Sigmoid colon (tissue), 7 donors: ENCODE measurements at regions of chr15 and their contacts with region 1.

Region 1: GRCh38 chr15:37072181-37072580 is 28.2 kb downstream of the MEIS2 start:
- DNase-seq: no peak
- H3K4me3 ChIP-seq: no peak overlapping the region
- H3K27ac ChIP-seq: no peak overlapping the region
- H3K4me1 ChIP-seq: peaks cover 0 to 40% (median 20%) of the 10 kb centered on the region in 4 donors
- H3K27me3 ChIP-seq: no peaks in the 10 kb centered on the region
- CTCF ChIP-seq: no peak
- EP300 ChIP-seq: no peak
- POLR2A ChIP-seq: no peak

Region 2: GRCh38 chr15:37015035-37015434 is 57.1 kb before region 1 on chr15:
- intact Hi-C with region 1: no loop called
- DNase-seq: no peak
- H3K4me3 ChIP-seq: no peak overlapping the region
- H3K27ac ChIP-seq: peak overlapping the region; percentile 72 to 83 (median 81)
- H3K4me1 ChIP-seq: peaks cover 0 to 69% (median 51%) of the 10 kb centered on the region in 4 donors
- H3K27me3 ChIP-seq: no peaks in the 10 kb centered on the region
- CTCF ChIP-seq: no peak
- EP300 ChIP-seq: no peak
- POLR2A ChIP-seq: no peak

Region 3: DNA sequence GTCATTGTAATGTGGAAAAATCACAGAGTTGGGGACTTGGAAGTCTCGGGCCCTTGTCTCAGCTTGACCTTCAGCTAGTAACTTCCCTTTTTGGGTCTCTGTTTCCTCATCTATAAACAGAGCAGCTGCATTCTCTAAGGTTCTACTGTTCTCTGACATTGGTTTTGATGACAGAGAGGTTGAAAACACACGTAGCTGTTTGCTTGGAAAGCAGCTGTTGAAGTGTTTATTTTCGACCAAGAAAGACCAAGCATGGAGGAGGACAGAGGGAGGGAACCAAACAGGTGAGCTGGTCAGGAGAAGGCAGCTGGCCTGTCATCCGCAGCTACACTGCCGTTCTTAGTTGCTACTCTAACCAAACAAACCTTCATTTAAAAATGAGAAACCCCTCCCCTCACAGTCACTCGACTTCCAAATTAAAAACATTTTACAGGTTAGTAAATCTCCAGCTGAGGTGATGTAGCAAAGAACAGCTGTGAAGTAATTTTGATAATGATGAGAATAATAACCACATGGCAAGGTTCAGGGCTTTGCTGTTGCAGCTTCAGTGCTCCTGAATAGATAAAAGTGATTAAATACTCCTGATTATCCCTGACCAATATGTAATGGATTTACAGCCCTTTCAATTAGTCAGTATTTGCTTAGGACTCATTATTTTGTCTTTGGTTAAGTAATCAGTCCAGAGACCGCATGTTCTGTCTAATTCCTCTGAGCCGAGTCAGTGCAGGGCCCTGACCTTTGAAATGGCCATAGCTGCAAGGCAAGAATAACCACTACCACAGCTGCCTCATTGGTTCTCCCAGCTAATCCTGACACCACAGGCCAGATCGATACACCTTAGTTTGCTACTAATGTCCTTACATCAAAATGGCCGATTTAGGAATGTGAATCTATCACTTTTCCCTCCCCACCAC is 37.1 kb before region 1 on chr15:
- intact Hi-C with region 1: loop called (anchors 5 kb)
- DNase-seq: no peak
- H3K4me3 ChIP-seq: no peak overlapping the region
- H3K27ac ChIP-seq: peak overlapping the region in 3 of 4 donors; percentile 14 to 40 (median 26)
- H3K4me1 ChIP-seq: peaks cover 0 to 87% (median 64%) of the 10 kb centered on the region in 4 donors
- H3K27me3 ChIP-seq: no peaks in the 10 kb centered on the region
- CTCF ChIP-seq: no peak
- EP300 ChIP-seq: no peak
- POLR2A ChIP-seq: no peak

Region 4: DNA sequence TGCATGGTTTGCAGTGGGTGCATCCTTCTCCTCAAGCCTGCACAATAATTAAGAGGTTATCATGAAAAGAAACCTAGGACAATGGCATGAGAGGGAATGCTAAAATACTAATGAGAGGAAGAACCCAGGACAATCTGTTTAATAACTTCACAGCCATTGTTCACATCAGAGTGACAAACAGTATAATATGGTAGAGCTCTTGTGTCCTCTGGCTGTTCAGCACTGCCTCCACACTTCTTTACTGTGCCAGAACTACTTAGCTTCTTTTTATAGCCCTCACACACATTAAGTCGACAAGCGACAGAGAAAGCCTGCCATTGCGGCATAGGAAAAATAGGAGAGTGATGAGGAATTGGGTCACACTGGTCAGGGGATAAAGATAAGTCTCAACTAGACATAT is 93.2 kb after region 1 on chr15:
- intact Hi-C with region 1: no loop called
- DNase-seq: no peak
- H3K4me3 ChIP-seq: no peak overlapping the region
- H3K27ac ChIP-seq: no peak overlapping the region
- H3K4me1 ChIP-seq: no peaks in the 10 kb centered on the region
- H3K27me3 ChIP-seq: no peaks in the 10 kb centered on the region
- CTCF ChIP-seq: no peak
- EP300 ChIP-seq: no peak
- POLR2A ChIP-seq: no peak